Panc1 (cell line): ENCODE measurements at regions of chr12 and their contacts with region 1.

Region 1: GRCh38 chr12:3207858-3208257 is 130.7 kb downstream of the TSPAN9 start:
- DNase-seq: no peak
- ATAC-seq: 0 out of 2 replicates have a peak, but pooled peaks have one; percentile 56
- H3K4me3 ChIP-seq: no peak overlapping the region
- H3K27ac ChIP-seq: no peak overlapping the region
- H3K4me1 ChIP-seq: no peaks in the 10 kb centered on the region
- H3K27me3 ChIP-seq: no peaks in the 10 kb centered on the region
- CTCF ChIP-seq: no peak

Region 2: GRCh38 chr12:2890388-2891239 is 317.2 kb before region 1 on chr12 and contains the start of gene TULP3:
- CTCF ChIA-PET with region 1: interaction called, 12 read pairs
- POLR2A ChIA-PET with region 1: no interaction called
- in situ Hi-C with region 1: no loop called
- intact Hi-C with region 1: no loop called
- DNase-seq: peak; percentile 62
- ATAC-seq: peak; percentile 96
- H3K4me3 ChIP-seq: peak within 1 kb of the TSS; percentile 87
- H3K27ac ChIP-seq: peak within 1 kb of the TSS; percentile 91
- H3K4me1 ChIP-seq: peaks cover 6% of the 10 kb centered on the region
- H3K27me3 ChIP-seq: no peaks in the 10 kb centered on the region
- CTCF ChIP-seq: no peak
- total RNA-seq, gene TULP3: 29.3 TPM

Region 3: GRCh38 chr12:3182426-3182825 is 25.4 kb before region 1 on chr12:
- CTCF ChIA-PET with region 1: interaction called, 10 read pairs
- POLR2A ChIA-PET with region 1: no interaction called
- in situ Hi-C with region 1: no loop called
- intact Hi-C with region 1: no loop called
- DNase-seq: no peak
- ATAC-seq: no peak
- H3K4me3 ChIP-seq: no peak overlapping the region
- H3K27ac ChIP-seq: no peak overlapping the region
- H3K4me1 ChIP-seq: no peaks in the 10 kb centered on the region
- H3K27me3 ChIP-seq: no peaks in the 10 kb centered on the region
- CTCF ChIP-seq: no peak

Region 4: GRCh38 chr12:3275171-3276041 is 67.5 kb after region 1 on chr12:
- CTCF ChIA-PET with region 1: interaction called, 14 read pairs
- POLR2A ChIA-PET with region 1: no interaction called
- in situ Hi-C with region 1: no loop called
- intact Hi-C with region 1: no loop called
- DNase-seq: peak; percentile 20
- ATAC-seq: peak; percentile 88
- H3K4me3 ChIP-seq: no peak overlapping the region
- H3K27ac ChIP-seq: no peak overlapping the region
- H3K4me1 ChIP-seq: no peaks in the 10 kb centered on the region
- H3K27me3 ChIP-seq: no peaks in the 10 kb centered on the region
- CTCF ChIP-seq: peak; percentile 90

Region 5: GRCh38 chr12:3803865-3804472 is 596.1 kb after region 1 on chr12:
- CTCF ChIA-PET with region 1: no interaction called
- POLR2A ChIA-PET with region 1: no interaction called
- in situ Hi-C with region 1: no loop called
- intact Hi-C with region 1: no loop called
- DNase-seq: peak; percentile 54
- ATAC-seq: peak; percentile 88
- H3K4me3 ChIP-seq: no peak overlapping the region
- H3K27ac ChIP-seq: no peak overlapping the region
- H3K4me1 ChIP-seq: no peaks in the 10 kb centered on the region
- H3K27me3 ChIP-seq: no peaks in the 10 kb centered on the region
- CTCF ChIP-seq: peak; percentile 83